ACHN (cell line): ENCODE measurements at regions of chr11 and their contacts with region 1.

Region 1: DNA sequence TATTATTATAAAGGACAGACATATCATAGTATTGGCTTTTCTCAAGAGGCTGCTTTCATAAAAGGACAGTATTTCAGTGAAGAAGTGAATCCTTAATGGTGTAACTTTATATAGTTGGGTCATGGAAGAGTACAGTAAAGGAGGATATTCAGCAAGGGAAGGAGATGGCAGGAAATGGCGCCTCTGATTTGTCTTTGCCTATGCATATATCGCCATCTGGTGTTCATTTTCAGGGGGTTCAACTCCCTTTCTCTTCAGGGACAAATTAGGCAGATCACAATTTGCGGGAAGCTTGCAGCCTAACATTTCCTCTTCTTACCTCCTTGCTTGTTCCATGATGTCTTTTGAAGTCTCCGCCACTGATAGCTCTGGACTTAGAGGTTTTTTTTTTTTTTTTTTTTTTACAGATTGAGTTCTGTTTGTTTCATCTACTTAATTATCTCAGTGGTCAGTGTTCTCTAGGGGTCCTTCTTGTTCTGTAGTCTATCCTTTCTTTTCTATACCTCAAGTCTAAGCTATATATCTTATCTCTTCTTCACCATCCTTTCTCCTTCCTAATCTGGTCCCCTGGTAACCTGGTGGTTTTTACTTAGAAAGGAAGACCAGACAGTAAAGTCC is 21.8 kb upstream of the RRM1 start:
- DNase-seq: peak; percentile 70

Region 2: DNA sequence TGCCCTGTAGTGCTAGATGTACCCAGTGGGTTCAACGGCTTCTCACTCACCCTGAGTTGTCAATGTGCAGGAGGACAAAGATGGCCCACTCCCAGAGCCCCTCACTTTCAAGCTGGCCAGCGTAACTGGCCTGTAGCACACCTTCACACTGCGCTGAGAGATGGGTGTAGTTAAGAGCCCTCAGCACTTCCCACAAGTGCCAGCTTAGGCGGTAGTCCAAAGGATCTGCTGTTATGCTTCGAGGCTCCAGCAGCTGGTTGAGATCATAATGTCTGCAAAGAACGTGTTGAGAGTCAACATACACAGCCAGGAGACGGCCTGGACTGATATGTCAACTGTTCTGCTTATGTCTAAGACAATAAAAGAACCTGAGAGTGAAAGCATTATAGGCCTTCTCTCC is 386.9 kb before region 1 on chr11:
- in situ Hi-C with region 1: no loop called
- DNase-seq: no peak

Region 3: GRCh38 chr11:3959015-3959919 is 113.5 kb before region 1 on chr11:
- in situ Hi-C with region 1: loop called (anchors 25 kb)
- DNase-seq: peak; percentile 93